ENCODE measurements at regions of chr9 and their contacts with region 1.

Region 1: GRCh38 chr9:111896353-111896958 is at the start of gene UGCG:
- DNase-seq: peak; percentile 91
- H3K4me3 ChIP-seq: peak within 1 kb of the TSS; percentile 87 to 97 (median 96)
- H3K27ac ChIP-seq: peak within 1 kb of the TSS; percentile 96 to 99 (median 98)
- H3K4me1 ChIP-seq: peaks cover 0 to 43% (median 38%) of the 10 kb centered on the region in 4 donors
- H3K27me3 ChIP-seq: no peaks in the 10 kb centered on the region
- CTCF ChIP-seq: no peak
- EP300 ChIP-seq: no peak
- POLR2A ChIP-seq: peak; percentile 77 to 84
- total RNA-seq, gene UGCG: 18.6 to 89.3 (median 27.0) TPM

Region 2: GRCh38 chr9:111559000-111559610 is 337.4 kb before region 1 on chr9:
- intact Hi-C with region 1: no loop called
- DNase-seq: no peak
- H3K4me3 ChIP-seq: no peak overlapping the region
- H3K27ac ChIP-seq: no peak overlapping the region
- H3K4me1 ChIP-seq: no peaks in the 10 kb centered on the region
- H3K27me3 ChIP-seq: no peaks in the 10 kb centered on the region
- CTCF ChIP-seq: no peak
- EP300 ChIP-seq: no peak
- POLR2A ChIP-seq: no peak

Region 3: DNA sequence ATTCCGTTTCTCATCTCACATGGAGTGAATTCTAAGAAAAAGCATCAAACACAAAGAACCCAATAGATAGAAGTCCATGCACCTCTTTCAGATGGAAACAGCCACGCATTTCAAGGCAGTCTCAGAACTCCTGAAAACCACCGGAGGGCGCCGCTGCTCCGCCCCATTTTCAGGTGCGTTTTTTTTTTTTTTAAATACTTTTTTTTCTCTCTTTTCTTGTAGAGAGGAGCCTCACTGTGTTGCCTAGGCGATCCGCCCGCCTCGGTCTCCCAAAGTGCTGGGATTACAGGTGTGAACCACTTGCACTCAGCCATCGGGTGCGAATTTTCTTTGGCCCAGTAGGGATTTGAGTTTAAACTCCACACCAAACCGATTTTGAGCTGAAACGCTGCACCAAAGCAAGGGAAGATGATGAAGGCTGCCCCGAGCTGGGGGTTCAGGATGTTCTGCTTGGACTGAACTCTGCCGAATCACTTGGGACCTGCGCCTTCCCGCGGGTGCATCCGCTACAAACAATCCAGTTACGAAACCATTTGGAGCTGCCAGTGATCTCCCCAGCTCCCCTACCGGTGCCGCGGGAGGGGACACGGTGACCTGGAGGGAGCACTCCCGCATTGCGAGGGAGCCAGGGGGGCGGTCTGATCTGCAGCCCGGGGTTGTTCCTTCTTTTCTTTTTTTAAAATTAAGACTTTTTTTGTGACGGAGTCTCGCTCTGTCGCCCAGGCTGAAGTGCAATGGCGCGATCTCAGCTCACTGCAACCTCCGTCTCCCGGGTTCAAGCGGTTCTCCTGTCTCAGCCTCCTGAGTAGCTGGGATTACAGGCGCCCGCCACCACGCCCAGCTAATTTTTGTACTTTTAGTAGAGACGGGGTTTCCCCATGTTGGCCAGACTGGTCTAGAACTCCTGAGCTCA is 298.4 kb before region 1 on chr9:
- intact Hi-C with region 1: loop called (anchors 10 kb)
- DNase-seq: peak; percentile 89
- H3K4me3 ChIP-seq: peak overlapping the region; percentile 62 to 80 (median 65)
- H3K27ac ChIP-seq: peak overlapping the region; percentile 84 to 89 (median 87)
- H3K4me1 ChIP-seq: peaks cover 0 to 24% (median 5%) of the 10 kb centered on the region in 4 donors
- H3K27me3 ChIP-seq: no peaks in the 10 kb centered on the region
- CTCF ChIP-seq: peak; percentile 3 to 58 (median 29)
- EP300 ChIP-seq: no peak
- POLR2A ChIP-seq: no peak

Region 4: DNA sequence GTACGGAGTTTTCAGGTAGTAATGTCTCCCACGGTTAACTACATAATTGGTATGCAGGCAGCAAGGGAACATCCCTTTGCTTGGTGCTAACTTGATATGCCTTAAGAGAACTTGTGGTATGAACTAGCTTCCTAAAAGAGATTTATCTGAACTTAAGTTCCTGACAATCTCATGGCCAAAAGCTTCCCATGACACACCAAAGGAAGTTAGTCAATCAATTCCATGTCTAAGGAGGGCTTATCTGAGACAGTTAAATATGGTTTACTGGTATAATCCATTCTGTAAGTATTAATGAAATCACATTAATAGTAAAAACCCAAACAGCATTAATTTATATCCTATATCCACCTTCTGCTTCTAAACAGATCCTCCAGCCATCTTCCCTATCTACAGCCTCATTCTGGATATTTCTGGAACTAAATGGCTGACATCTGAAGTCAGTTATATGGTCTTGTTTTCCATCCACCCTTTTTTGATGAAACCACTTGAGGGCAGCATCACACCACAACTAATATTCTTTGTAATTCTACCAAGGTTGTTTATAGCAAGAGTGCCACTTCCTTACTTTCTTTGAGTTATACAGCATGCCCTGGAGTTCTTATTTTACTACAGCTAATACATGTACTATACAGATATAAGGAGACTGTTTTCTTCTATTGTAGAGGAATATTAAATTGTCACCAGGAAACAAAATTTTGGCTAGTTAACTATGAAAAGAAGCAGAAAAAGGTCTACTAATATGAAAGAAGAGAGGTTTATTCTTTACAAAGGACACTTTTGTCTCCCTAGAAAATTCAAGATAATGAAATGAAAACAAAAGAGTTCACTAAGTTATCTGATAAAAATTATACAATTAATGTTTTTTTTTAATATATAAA is 136.5 kb before region 1 on chr9:
- intact Hi-C with region 1: loop called (anchors 5 kb)
- DNase-seq: no peak
- H3K4me3 ChIP-seq: no peak overlapping the region
- H3K27ac ChIP-seq: peak overlapping the region in 1 of 4 donors; percentile 11
- H3K4me1 ChIP-seq: peaks cover 0 to 11% (median 1%) of the 10 kb centered on the region in 4 donors
- H3K27me3 ChIP-seq: no peaks in the 10 kb centered on the region
- CTCF ChIP-seq: peak; percentile 31 to 73 (median 62)
- EP300 ChIP-seq: no peak
- POLR2A ChIP-seq: no peak

Region 5: DNA sequence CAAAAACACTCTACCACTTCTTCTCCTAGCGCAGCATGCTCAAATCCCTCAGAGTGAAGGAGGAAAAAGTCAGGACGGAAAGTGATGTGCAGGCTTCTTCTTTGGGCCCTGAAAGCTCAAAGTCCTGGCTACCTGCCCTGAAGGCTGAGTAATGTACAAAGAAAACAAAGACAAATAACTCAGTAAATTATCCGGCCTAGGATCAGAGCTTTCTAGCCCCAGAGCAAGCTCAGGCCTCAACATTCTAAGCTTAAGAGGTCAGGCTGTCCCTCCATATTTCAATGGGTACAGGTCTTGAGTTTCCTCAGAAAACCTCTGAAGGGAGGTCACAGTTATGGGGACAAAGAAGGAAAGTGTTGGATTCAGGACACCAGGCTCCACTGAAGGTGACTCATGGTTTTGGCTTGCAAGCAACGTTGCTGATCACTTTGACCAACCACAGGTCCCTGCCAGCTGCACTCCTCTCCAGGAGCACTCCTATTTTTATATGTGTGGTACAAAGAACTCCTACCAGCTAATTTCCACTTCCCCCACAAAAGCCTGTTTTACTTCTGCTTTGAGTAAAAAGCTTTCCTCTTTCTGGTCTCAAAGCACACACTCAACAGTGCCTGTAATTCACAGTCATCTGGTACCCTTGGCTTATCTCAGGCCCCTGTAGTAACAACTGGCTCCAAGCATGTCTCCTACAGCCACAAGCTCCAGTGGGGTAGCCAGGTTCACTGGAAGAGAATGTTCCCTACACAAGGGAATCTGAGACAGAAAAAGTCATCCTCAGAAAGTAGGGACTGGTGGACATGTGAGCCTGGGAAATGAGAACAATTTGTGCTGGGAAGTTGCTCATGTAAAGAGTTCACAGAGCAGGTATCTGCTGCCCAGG is 115.8 kb after region 1 on chr9:
- intact Hi-C with region 1: loop called (anchors 5 kb)
- DNase-seq: peak; percentile 83
- H3K4me3 ChIP-seq: no peak overlapping the region
- H3K27ac ChIP-seq: peak overlapping the region; percentile 72 to 88 (median 82)
- H3K4me1 ChIP-seq: peaks cover 0 to 32% (median 25%) of the 10 kb centered on the region in 4 donors
- H3K27me3 ChIP-seq: no peaks in the 10 kb centered on the region
- CTCF ChIP-seq: no peak
- EP300 ChIP-seq: peak in 1 of 4 donors; percentile 22
- POLR2A ChIP-seq: no peak

Region 6: DNA sequence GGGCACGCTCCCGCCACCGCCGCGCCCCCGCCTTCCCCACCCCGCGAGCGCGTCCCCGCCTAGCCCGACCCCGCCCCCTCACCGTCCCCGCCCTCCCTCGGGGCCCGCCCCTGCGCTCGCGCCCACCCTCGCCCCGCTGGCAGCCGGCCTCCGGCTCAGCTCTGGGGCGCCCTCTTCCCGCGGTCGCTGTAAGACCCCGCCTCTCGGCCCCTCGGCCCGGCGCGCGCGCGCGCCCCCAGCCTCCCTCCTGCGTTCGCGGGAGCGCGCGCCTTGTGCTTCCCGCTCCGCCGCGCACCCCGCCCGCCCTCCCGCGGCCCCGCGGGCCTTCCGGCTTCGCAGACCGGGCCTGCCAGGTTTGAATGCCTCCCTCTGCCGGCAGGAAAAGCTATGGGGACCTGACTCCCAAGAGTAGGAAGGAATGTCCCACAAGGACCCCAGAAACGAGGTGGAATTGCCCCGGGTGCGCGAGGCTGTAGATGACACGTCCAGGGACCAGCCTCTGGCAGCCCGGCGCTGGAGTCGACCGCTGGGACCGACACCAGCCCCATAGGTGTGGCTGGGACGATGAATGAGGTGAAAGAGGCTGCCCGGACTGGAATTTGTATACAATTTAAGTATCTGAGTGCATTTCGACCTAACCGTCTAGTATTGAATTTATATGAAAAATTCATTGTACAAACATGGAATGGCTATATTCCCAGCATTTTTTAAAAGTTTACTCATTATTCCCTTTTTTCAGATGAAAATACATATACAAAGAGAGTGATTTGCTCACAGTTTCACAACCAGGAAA is 437.4 kb after region 1 on chr9:
- intact Hi-C with region 1: loop called (anchors 2 kb)
- DNase-seq: peak; percentile 97
- H3K4me3 ChIP-seq: peak overlapping the region; percentile 59 to 99 (median 79)
- H3K27ac ChIP-seq: peak overlapping the region; percentile 94 to 99 (median 98)
- H3K4me1 ChIP-seq: peaks cover 2 to 15% (median 11%) of the 10 kb centered on the region in 4 donors
- H3K27me3 ChIP-seq: no peaks in the 10 kb centered on the region
- CTCF ChIP-seq: peak; percentile 25 to 69 (median 43)
- EP300 ChIP-seq: no peak
- POLR2A ChIP-seq: no peak

Region 7: GRCh38 chr9:112486221-112487007 is 590.0 kb after region 1 on chr9 and contains the start of gene KIAA1958:
- intact Hi-C with region 1: loop called (anchors 5 kb)
- DNase-seq: peak; percentile 89
- H3K4me3 ChIP-seq: peak within 1 kb of the TSS; percentile 72 to 95 (median 92)
- H3K27ac ChIP-seq: peak within 1 kb of the TSS; percentile 75 to 85 (median 80)
- H3K4me1 ChIP-seq: peaks cover 0 to 13% (median 8%) of the 10 kb centered on the region in 4 donors
- H3K27me3 ChIP-seq: no peaks in the 10 kb centered on the region
- CTCF ChIP-seq: no peak
- EP300 ChIP-seq: no peak
- POLR2A ChIP-seq: peak in 1 of 2 donors; percentile 32
- total RNA-seq, gene KIAA1958: 4.3 to 8.0 (median 5.1) TPM